ENCODE measurements at regions of chr14 and their contacts with region 1.

Region 1: GRCh38 chr14:102316743-102317563 is 2.6 kb upstream of the ZNF839 start:
- DNase-seq: peak; percentile 97
- ATAC-seq: peak; percentile 69
- H3K4me3 Mint-ChIP-seq: peak overlapping the region; percentile 92
- H3K27ac Mint-ChIP-seq: peak overlapping the region; percentile 98
- H3K4me1 Mint-ChIP-seq: peaks cover 61% of the 10 kb centered on the region
- H3K27me3 Mint-ChIP-seq: no peaks in the 10 kb centered on the region

Region 2: GRCh38 chr14:101707068-101707842 is 609.7 kb before region 1 on chr14:
- CTCF ChIA-PET with region 1: interaction called, 5 read pairs
- POLR2A ChIA-PET with region 1: no interaction called
- intact Hi-C with region 1: loop called (anchors 1 to 10 kb)
- DNase-seq: peak; percentile 74
- ATAC-seq: peak; percentile 79
- H3K4me3 Mint-ChIP-seq: peak overlapping the region; percentile 33
- H3K27ac Mint-ChIP-seq: peak overlapping the region; percentile 81
- H3K4me1 Mint-ChIP-seq: peaks cover 29% of the 10 kb centered on the region
- H3K27me3 Mint-ChIP-seq: no peaks in the 10 kb centered on the region

Region 3: DNA sequence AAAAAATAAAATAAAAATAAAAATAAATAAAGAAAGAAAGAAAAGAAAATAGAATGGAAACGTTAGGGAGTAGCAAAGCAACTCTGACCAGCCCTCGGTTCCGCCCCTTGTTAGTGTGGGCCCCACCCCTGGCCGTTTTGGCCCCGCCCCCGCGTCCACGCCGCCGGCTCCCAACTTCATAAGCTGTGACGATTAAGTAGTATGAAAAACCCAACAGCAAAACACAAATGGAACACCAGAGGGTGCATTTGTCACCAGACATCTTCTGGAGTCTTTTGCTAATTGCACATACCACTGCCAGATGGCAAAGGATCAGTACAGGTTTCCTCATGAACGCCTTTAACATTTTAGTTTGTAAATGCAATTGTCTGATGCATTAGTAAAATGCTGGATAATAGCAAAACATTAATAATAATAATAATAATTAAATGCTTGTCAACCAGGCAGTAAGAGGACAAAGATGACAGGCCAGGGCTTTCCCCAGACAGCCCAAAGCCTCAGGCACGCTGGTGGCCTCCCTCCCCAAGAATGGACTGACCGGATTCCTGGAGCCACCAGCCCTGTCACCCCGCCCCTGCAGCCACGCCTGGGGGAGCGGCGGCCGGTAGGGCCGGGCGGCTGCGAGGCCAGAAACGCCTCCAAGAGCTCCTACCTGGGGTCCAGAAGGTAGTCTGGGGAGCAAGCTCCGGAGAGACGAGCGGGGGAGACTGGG is 253.7 kb before region 1 on chr14:
- CTCF ChIA-PET with region 1: interaction called, 5 read pairs
- POLR2A ChIA-PET with region 1: no interaction called
- intact Hi-C with region 1: loop called in 1 of 2 experiments (anchors 1 kb)
- DNase-seq: peak; percentile 80
- ATAC-seq: peak; percentile 85
- H3K4me3 Mint-ChIP-seq: no peak overlapping the region
- H3K27ac Mint-ChIP-seq: no peak overlapping the region
- H3K4me1 Mint-ChIP-seq: peaks cover 3% of the 10 kb centered on the region
- H3K27me3 Mint-ChIP-seq: no peaks in the 10 kb centered on the region

Region 4: GRCh38 chr14:102187058-102187457 is 129.9 kb before region 1 on chr14:
- CTCF ChIA-PET with region 1: interaction called, 4 read pairs
- POLR2A ChIA-PET with region 1: interaction called, 3 read pairs
- intact Hi-C with region 1: loop called in 1 of 2 experiments (anchors 2 kb)
- DNase-seq: no peak
- ATAC-seq: no peak
- H3K4me3 Mint-ChIP-seq: no peak overlapping the region
- H3K27ac Mint-ChIP-seq: peak overlapping the region; percentile 79
- H3K4me1 Mint-ChIP-seq: peaks cover 61% of the 10 kb centered on the region
- H3K27me3 Mint-ChIP-seq: no peaks in the 10 kb centered on the region

Region 5: GRCh38 chr14:102362545-102363181 is 45.7 kb after region 1 on chr14 and contains the starts of genes CINP and TECPR2:
- CTCF ChIA-PET with region 1: interaction called, 4 read pairs
- POLR2A ChIA-PET with region 1: interaction called, 5 read pairs
- intact Hi-C with region 1: loop called (anchors 1 kb)
- DNase-seq: peak; percentile 99
- ATAC-seq: peak; percentile 78
- H3K4me3 Mint-ChIP-seq: no peak within 1 kb of the TSS
- H3K27ac Mint-ChIP-seq: peak within 1 kb of the TSS; percentile 96
- H3K4me1 Mint-ChIP-seq: peaks cover 36% of the 10 kb centered on the region
- H3K27me3 Mint-ChIP-seq: no peaks in the 10 kb centered on the region
- total RNA-seq, gene CINP: 47.0 to 51.4 TPM
- total RNA-seq, gene TECPR2: 5.6 to 6.9 TPM

Region 6: GRCh38 chr14:102524466-102525218 is 207.7 kb after region 1 on chr14:
- CTCF ChIA-PET with region 1: interaction called, 4 read pairs
- POLR2A ChIA-PET with region 1: no interaction called
- intact Hi-C with region 1: loop called in 1 of 2 experiments (anchors 2 kb)
- DNase-seq: peak; percentile 98
- ATAC-seq: peak; percentile 98
- H3K4me3 Mint-ChIP-seq: peak overlapping the region; percentile 68
- H3K27ac Mint-ChIP-seq: peak overlapping the region; percentile 32
- H3K4me1 Mint-ChIP-seq: peaks cover 35% of the 10 kb centered on the region
- H3K27me3 Mint-ChIP-seq: no peaks in the 10 kb centered on the region

Measured in activated CD4-positive, alpha-beta T cell treated with anti-CD3 and anti-CD28 coated beads for 36 hours (primary cell).